ENCODE measurements at regions of chr14 and their contacts with region 1.

Region 1: GRCh38 chr14:100828031-100828769 is 2.3 kb downstream of the MEG3 start:
- DNase-seq: peak; percentile 17 to 85 (median 57)
- ATAC-seq: peak; percentile 54 to 69 (median 66)
- H3K4me3 ChIP-seq: peak overlapping the region; percentile 5 to 52 (median 29)
- H3K27ac ChIP-seq: peak overlapping the region in 1 of 4 donors; percentile 73
- H3K4me1 ChIP-seq: no peaks in the 10 kb centered on the region
- H3K27me3 ChIP-seq: no peaks in the 10 kb centered on the region
- CTCF ChIP-seq: peak in 3 of 4 donors; percentile 21 to 38 (median 33)

Region 2: DNA sequence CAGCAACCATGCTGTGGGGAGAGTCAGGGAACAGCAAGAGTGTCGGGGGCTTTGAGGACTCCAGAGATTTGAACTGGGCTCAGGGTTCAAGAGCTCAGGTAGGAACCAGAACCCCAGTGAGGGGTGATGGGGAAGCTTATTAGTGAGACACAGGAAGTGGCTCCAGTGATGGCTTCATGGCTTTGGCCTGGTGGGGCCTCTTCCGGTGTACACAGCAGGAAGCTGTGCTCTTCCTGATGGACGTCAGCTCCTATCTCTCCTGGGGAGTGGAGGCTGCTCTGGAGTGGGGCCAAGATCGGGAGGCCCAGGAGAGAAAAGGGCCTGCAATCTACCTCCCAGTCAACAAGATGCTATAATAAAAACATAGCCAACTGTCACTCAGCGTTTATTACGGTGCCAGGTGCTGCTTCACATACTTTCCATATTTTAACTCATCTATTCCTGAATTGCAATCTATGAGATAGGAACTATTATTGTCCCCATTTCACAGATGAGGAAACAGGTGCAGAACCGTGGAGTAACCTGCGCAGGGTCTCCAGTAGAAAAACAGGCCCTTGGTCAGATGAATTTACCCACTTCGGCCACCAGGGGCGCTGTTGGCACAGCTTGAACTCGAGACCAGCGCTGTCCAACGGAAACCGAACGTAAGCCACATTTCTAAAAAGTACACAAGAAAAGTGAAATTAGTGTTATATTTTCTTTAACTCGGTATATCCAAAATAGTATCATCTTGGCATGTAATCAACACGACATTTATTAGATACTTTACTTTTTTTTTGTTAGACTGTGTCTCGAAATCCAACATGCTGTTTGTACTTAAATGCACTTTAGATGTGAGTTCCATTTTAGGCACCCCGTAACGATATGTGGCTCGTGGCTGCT is 165.1 kb before region 1 on chr14:
- intact Hi-C with region 1: loop called in 1 of 3 experiments (anchors 10 kb)
- DNase-seq: peak in 5 of 6 donors; percentile 40 to 87 (median 70)
- ATAC-seq: peak; percentile 38 to 53 (median 48)
- H3K4me3 ChIP-seq: no peak overlapping the region
- H3K27ac ChIP-seq: no peak overlapping the region
- H3K4me1 ChIP-seq: peaks cover 8 to 11% (median 10%) of the 10 kb centered on the region in 3 donors
- H3K27me3 ChIP-seq: no peaks in the 10 kb centered on the region
- CTCF ChIP-seq: peak; percentile 71 to 95 (median 86)

Region 3: DNA sequence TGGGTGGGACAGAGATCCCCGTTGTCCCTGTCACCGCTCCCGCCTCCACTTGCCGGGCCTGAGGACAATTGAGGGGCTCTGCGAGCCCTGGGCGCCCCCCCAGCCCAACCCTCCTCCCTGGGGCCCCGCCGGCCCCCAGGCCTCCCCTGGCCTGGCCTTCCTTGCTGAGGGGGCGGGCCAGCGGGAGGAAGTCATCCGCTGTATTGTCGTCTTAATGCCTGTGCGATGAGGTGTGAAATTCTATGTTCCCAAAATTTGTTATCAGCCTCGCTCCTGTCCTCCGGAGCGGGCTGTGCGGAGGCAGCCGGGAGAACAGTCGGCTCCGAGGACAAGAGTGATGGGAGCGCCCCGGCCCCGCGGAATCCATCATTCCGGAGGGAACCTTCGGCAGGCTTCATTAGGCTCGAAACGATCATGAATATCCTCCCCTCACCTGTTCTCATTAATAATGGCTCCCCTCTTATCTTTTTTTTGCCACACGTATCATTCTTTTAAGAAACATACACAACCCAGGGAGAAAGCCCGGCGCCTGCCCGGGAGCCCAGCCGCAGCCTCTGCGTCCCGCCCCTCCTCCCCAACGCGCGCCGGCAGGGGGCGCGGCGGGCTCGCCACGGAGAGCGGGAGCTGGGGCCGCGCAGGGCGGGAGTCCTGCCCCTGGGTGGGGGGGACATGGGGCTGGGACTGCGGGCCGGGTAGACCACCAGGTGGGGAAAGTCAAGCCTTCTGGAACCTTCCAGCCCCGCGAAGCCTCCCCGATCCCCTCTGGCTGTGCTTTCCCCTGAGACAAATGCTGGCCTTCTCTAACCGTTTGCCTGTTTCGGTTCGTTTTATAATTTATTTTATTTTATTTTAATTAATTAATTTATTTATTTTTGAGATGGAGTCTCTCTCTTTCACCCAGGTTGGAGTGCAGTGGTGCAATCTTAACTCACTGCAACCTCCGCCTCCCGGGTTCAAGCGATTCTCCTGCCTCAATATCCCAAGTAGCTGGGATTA is 118.6 kb before region 1 on chr14:
- intact Hi-C with region 1: loop called in 1 of 3 experiments (anchors 10 kb)
- DNase-seq: no peak
- ATAC-seq: no peak
- H3K4me3 ChIP-seq: no peak overlapping the region
- H3K27ac ChIP-seq: peak overlapping the region in 3 of 4 donors; percentile 38 to 81 (median 74)
- H3K4me1 ChIP-seq: peaks cover 0 to 32% (median 15%) of the 10 kb centered on the region in 3 donors
- H3K27me3 ChIP-seq: no peaks in the 10 kb centered on the region
- CTCF ChIP-seq: peak in 1 of 4 donors; percentile 26